ENCODE measurements at regions of chr10 and their contacts with region 1.

Region 1: GRCh38 chr10:24642622-24643417 is 80.9 kb downstream of the ARHGAP21 start:
- DNase-seq: peak in 3 of 9 experiments; percentile 13 to 75 (median 62)
- ATAC-seq: peak; percentile 92
- H3K4me3 ChIP-seq: no peak overlapping the region
- H3K4me3 Mint-ChIP-seq: no peak overlapping the region
- H3K27ac ChIP-seq: no peak overlapping the region
- H3K27ac Mint-ChIP-seq: no peak overlapping the region
- H3K4me1 ChIP-seq: peaks cover 4% of the 10 kb centered on the region
- H3K4me1 Mint-ChIP-seq: no peaks in the 10 kb centered on the region
- H3K27me3 ChIP-seq: no peaks in the 10 kb centered on the region
- H3K27me3 Mint-ChIP-seq: no peaks in the 10 kb centered on the region
- CTCF ChIP-seq: peak; percentile 84

Region 2: GRCh38 chr10:24617771-24618391 is 24.9 kb before region 1 on chr10:
- CTCF ChIA-PET with region 1: interaction called, 23 read pairs
- POLR2A ChIA-PET with region 1: interaction called, 8 read pairs
- intact Hi-C with region 1: no loop called
- DNase-seq: peak in 7 of 9 experiments; percentile 3 to 72 (median 50)
- ATAC-seq: no peak
- H3K4me3 ChIP-seq: no peak overlapping the region
- H3K4me3 Mint-ChIP-seq: no peak overlapping the region
- H3K27ac ChIP-seq: no peak overlapping the region
- H3K27ac Mint-ChIP-seq: peak overlapping the region; percentile 58
- H3K4me1 ChIP-seq: peaks cover 9% of the 10 kb centered on the region
- H3K4me1 Mint-ChIP-seq: peaks cover 29% of the 10 kb centered on the region
- H3K27me3 ChIP-seq: no peaks in the 10 kb centered on the region
- H3K27me3 Mint-ChIP-seq: no peaks in the 10 kb centered on the region
- CTCF ChIP-seq: peak; percentile 67

Region 3: DNA sequence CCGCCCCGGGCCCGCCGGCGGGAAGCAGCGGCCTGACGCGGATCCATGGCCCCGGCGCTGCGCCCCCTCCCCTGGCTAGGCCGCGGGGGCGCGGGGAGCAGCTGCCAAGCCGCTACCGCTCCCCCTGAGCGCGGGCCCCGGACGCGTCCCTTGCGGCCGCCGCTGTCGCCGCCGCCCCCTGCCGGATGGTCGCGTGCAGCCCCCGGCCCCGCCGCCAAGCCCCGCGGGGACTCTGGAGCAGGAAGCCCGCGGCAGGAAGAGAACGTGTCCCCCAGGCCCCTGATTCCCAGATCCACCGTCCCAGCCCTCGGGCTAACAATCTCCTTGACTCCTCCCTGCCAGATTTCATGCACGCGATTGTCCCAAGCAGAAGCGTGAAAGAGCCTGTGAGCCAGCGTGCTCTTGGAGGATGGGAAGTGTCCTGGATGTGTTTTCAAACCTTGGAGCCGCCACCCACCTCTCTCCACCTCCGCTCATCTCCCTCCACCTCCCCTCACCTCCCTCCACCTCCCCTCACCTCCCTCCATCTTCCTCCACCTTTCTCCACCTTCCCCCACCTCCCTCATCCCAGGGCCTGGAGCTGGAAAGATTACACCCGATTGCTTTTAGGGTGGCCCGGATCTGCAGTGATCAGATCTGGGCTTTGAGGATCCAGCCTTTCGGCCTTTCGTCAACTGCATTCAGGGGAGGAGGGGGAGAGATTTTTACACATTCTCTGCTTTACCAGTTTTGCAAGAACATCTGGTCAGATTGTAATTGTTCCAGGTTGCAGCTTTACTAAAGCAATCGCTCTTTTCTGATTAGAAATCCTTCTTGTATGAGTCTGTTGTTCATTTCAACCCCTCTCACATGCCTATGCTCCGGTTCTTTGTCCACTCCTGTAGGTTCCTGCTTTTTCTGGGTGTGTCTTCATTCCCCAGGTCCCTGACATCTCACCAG is 310.2 kb after region 1 on chr10:
- CTCF ChIA-PET with region 1: interaction called, 20 read pairs
- POLR2A ChIA-PET with region 1: no interaction called
- intact Hi-C with region 1: loop called (anchors 1 kb)
- DNase-seq: peak; percentile 25 to 84 (median 60)
- ATAC-seq: peak; percentile 82
- H3K4me3 ChIP-seq: peak overlapping the region; percentile 63 to 77
- H3K4me3 Mint-ChIP-seq: peak overlapping the region; percentile 82
- H3K27ac ChIP-seq: peak overlapping the region; percentile 31 to 35
- H3K27ac Mint-ChIP-seq: peak overlapping the region; percentile 84
- H3K4me1 ChIP-seq: peaks cover 15% of the 10 kb centered on the region
- H3K4me1 Mint-ChIP-seq: peaks cover 18% of the 10 kb centered on the region
- H3K27me3 ChIP-seq: no peaks in the 10 kb centered on the region
- H3K27me3 Mint-ChIP-seq: no peaks in the 10 kb centered on the region
- CTCF ChIP-seq: peak; percentile 63

Region 4: DNA sequence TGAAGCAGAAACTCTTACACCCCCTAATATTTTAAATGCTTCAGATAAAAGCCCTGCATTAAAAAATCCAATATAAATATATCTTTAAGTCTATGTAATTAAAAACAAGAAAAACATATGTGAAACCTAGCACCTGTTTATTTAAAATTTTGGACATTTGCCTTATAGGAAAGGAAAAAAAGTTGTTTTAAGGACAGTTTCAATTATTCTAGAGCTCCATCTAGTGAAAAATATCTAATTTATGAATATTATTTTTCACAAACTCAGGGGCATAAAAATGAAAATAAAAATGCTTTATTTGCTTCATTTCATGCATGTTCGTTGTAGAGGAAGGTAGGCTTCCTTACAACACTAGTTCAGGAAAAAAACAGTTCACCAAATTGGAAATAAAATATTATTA is 347.0 kb after region 1 on chr10:
- CTCF ChIA-PET with region 1: interaction called, 10 read pairs
- POLR2A ChIA-PET with region 1: no interaction called
- intact Hi-C with region 1: loop called (anchors 1 to 5 kb)
- DNase-seq: no peak
- ATAC-seq: no peak
- H3K4me3 ChIP-seq: no peak overlapping the region
- H3K4me3 Mint-ChIP-seq: no peak overlapping the region
- H3K27ac ChIP-seq: no peak overlapping the region
- H3K27ac Mint-ChIP-seq: no peak overlapping the region
- H3K4me1 ChIP-seq: no peaks in the 10 kb centered on the region
- H3K4me1 Mint-ChIP-seq: no peaks in the 10 kb centered on the region
- H3K27me3 ChIP-seq: no peaks in the 10 kb centered on the region
- H3K27me3 Mint-ChIP-seq: no peaks in the 10 kb centered on the region
- CTCF ChIP-seq: no peak

Region 5: GRCh38 chr10:25080880-25081581 is 438.2 kb after region 1 on chr10:
- CTCF ChIA-PET with region 1: interaction called, 71 read pairs
- POLR2A ChIA-PET with region 1: no interaction called
- intact Hi-C with region 1: loop called (anchors 1 kb)
- DNase-seq: peak; percentile 15 to 73 (median 60)
- ATAC-seq: peak; percentile 51
- H3K4me3 ChIP-seq: no peak overlapping the region
- H3K4me3 Mint-ChIP-seq: no peak overlapping the region
- H3K27ac ChIP-seq: no peak overlapping the region
- H3K27ac Mint-ChIP-seq: no peak overlapping the region
- H3K4me1 ChIP-seq: no peaks in the 10 kb centered on the region
- H3K4me1 Mint-ChIP-seq: peaks cover 3% of the 10 kb centered on the region
- H3K27me3 ChIP-seq: no peaks in the 10 kb centered on the region
- H3K27me3 Mint-ChIP-seq: peaks cover 7% of the 10 kb centered on the region
- CTCF ChIP-seq: peak; percentile 71

Region 6: GRCh38 chr10:25226775-25227682 is 584.2 kb after region 1 on chr10:
- CTCF ChIA-PET with region 1: no interaction called
- POLR2A ChIA-PET with region 1: no interaction called
- intact Hi-C with region 1: loop called in 1 of 2 experiments (anchors 2 kb)
- DNase-seq: peak in 2 of 9 experiments; percentile 5 to 15
- ATAC-seq: no peak
- H3K4me3 ChIP-seq: no peak overlapping the region
- H3K4me3 Mint-ChIP-seq: no peak overlapping the region
- H3K27ac ChIP-seq: no peak overlapping the region
- H3K27ac Mint-ChIP-seq: no peak overlapping the region
- H3K4me1 ChIP-seq: no peaks in the 10 kb centered on the region
- H3K4me1 Mint-ChIP-seq: no peaks in the 10 kb centered on the region
- H3K27me3 ChIP-seq: no peaks in the 10 kb centered on the region
- H3K27me3 Mint-ChIP-seq: no peaks in the 10 kb centered on the region
- CTCF ChIP-seq: peak; percentile 10